CD8-positive, alpha-beta memory T cell (primary cell): ENCODE measurements at regions of chr1 and their contacts with region 1.

Region 1: GRCh38 chr1:64966158-64966971 is at the start of gene JAK1:
- DNase-seq: peak; percentile 86 to 93 (median 88)
- H3K4me3 ChIP-seq: peak within 1 kb of the TSS; percentile 78
- H3K4me3 Mint-ChIP-seq: peak within 1 kb of the TSS; percentile 91 to 98 (median 93)
- H3K27ac ChIP-seq: peak within 1 kb of the TSS; percentile 93
- H3K27ac Mint-ChIP-seq: peak within 1 kb of the TSS; percentile 92 to 99 (median 97)
- H3K4me1 ChIP-seq: peaks cover 48% of the 10 kb centered on the region
- H3K4me1 Mint-ChIP-seq: peaks cover 17 to 56% (median 50%) of the 10 kb centered on the region in 3 donors
- H3K27me3 ChIP-seq: no peaks in the 10 kb centered on the region
- H3K27me3 Mint-ChIP-seq: no peaks in the 10 kb centered on the region
- total RNA-seq, gene JAK1: 106 to 108 TPM

Region 2: GRCh38 chr1:64864018-64864940 is 102.1 kb before region 1 on chr1:
- CTCF ChIA-PET with region 1: interaction called, 16 read pairs
- POLR2A ChIA-PET with region 1: interaction called, 4 read pairs
- DNase-seq: peak; percentile 40 to 81 (median 49)
- H3K4me3 ChIP-seq: no peak overlapping the region
- H3K4me3 Mint-ChIP-seq: peak overlapping the region in 6 of 7 donors; percentile 30 to 66 (median 62)
- H3K27ac ChIP-seq: peak overlapping the region; percentile 55
- H3K27ac Mint-ChIP-seq: peak overlapping the region; percentile 76 to 97 (median 88)
- H3K4me1 ChIP-seq: peaks cover 31% of the 10 kb centered on the region
- H3K4me1 Mint-ChIP-seq: peaks cover 51 to 66% (median 59%) of the 10 kb centered on the region in 3 donors
- H3K27me3 ChIP-seq: no peaks in the 10 kb centered on the region
- H3K27me3 Mint-ChIP-seq: no peaks in the 10 kb centered on the region

Region 3: DNA sequence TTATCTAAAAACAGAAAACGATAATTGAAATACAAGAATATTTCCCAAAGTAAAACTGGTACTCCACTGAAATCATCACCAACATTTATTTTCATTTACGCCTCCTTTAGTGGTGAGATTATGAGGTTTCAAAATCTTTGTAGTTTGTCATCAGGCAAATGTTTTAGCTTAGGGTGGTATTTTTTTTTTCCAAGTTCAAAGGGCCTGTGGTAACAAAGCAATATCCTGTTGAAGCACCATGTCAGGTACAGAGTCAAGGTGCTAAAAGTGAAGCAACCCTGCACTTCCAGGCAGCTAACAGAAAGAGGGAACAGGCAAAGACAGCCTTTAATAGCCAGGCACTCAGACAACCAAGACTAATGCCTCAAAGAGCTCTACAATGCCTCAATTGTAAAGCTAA is 89.2 kb before region 1 on chr1:
- CTCF ChIA-PET with region 1: interaction called, 4 read pairs
- POLR2A ChIA-PET with region 1: interaction called, 27 read pairs
- DNase-seq: peak in 4 of 5 donors; percentile 33 to 88 (median 74)
- H3K4me3 ChIP-seq: peak overlapping the region; percentile 6
- H3K4me3 Mint-ChIP-seq: peak overlapping the region; percentile 72 to 84 (median 83)
- H3K27ac ChIP-seq: no peak overlapping the region
- H3K27ac Mint-ChIP-seq: peak overlapping the region in 7 of 8 donors; percentile 76 to 98 (median 86)
- H3K4me1 ChIP-seq: peaks cover 55% of the 10 kb centered on the region
- H3K4me1 Mint-ChIP-seq: peaks cover 78 to 90% (median 89%) of the 10 kb centered on the region in 3 donors
- H3K27me3 ChIP-seq: no peaks in the 10 kb centered on the region
- H3K27me3 Mint-ChIP-seq: peaks cover 0 to 5% of the 10 kb centered on the region in 2 donors

Region 4: GRCh38 chr1:64923294-64923721 is 43.1 kb before region 1 on chr1:
- CTCF ChIA-PET with region 1: interaction called, 10 read pairs
- POLR2A ChIA-PET with region 1: interaction called, 3 read pairs
- DNase-seq: peak; percentile 13 to 50 (median 25)
- H3K4me3 ChIP-seq: no peak overlapping the region
- H3K4me3 Mint-ChIP-seq: peak overlapping the region; percentile 41 to 65 (median 59)
- H3K27ac ChIP-seq: no peak overlapping the region
- H3K27ac Mint-ChIP-seq: peak overlapping the region; percentile 68 to 88 (median 75)
- H3K4me1 ChIP-seq: peaks cover 79% of the 10 kb centered on the region
- H3K4me1 Mint-ChIP-seq: peaks cover 94 to 100% (median 100%) of the 10 kb centered on the region in 3 donors
- H3K27me3 ChIP-seq: no peaks in the 10 kb centered on the region
- H3K27me3 Mint-ChIP-seq: no peaks in the 10 kb centered on the region

Region 5: DNA sequence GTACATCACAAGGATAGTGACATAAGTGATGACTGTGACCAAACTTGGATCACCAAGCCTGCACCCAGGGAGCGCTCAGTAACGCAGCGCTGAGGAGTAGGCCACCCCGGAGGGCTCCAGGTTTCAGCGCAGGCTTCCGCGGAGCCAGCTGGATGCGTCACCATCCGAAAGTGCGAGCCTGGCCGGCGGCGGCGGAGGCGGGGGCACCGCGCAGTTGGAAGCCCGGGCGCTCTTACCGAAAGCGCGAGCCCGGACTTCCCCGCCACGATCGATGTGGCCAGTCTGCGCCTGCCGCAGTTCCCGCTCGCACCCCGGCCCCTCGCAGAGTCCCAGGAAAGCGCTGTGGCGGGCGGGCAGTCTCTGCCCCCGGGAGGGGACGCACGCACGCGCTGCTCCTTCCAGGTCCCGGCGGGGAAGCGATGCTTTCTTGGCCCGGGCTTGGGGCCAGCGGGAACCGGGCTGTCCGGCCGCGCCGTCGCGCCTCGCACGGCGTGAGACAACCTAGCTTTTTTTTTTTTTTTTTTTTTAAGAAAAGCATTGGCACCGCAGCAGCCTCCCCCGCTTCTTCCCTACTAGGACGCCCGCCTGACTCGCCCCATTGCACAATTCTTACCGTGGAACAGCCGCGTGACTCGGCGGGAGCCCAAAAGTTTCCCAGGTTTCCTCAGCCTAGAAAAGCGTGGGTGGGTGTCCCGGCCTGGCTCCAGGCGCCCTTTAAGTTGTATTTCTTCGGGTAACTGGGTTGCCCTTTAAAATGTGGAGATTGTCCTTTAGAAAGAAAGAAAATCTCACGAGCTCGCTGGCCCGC is 36.3 kb after region 1 on chr1:
- CTCF ChIA-PET with region 1: interaction called, 4 read pairs
- POLR2A ChIA-PET with region 1: interaction called, 11 read pairs
- DNase-seq: peak; percentile 64 to 82 (median 75)
- H3K4me3 ChIP-seq: peak overlapping the region; percentile 56
- H3K4me3 Mint-ChIP-seq: peak overlapping the region; percentile 67 to 89 (median 86)
- H3K27ac ChIP-seq: no peak overlapping the region
- H3K27ac Mint-ChIP-seq: peak overlapping the region in 7 of 8 donors; percentile 48 to 99 (median 96)
- H3K4me1 ChIP-seq: peaks cover 18% of the 10 kb centered on the region
- H3K4me1 Mint-ChIP-seq: peaks cover 27 to 32% (median 29%) of the 10 kb centered on the region in 3 donors
- H3K27me3 ChIP-seq: no peaks in the 10 kb centered on the region
- H3K27me3 Mint-ChIP-seq: peaks cover 6 to 7% of the 10 kb centered on the region in 2 donors

Region 6: GRCh38 chr1:65027666-65028358 is 61.4 kb after region 1 on chr1:
- CTCF ChIA-PET with region 1: no interaction called
- POLR2A ChIA-PET with region 1: no interaction called
- DNase-seq: no peak
- H3K4me3 ChIP-seq: no peak overlapping the region
- H3K4me3 Mint-ChIP-seq: no peak overlapping the region
- H3K27ac ChIP-seq: no peak overlapping the region
- H3K27ac Mint-ChIP-seq: peak overlapping the region in 1 of 8 donors; percentile 76
- H3K4me1 ChIP-seq: no peaks in the 10 kb centered on the region
- H3K4me1 Mint-ChIP-seq: peaks cover 9 to 25% (median 10%) of the 10 kb centered on the region in 3 donors
- H3K27me3 ChIP-seq: no peaks in the 10 kb centered on the region
- H3K27me3 Mint-ChIP-seq: no peaks in the 10 kb centered on the region

Region 7: GRCh38 chr1:65067491-65068201 is 101.3 kb after region 1 on chr1:
- CTCF ChIA-PET with region 1: interaction called, 6 read pairs
- POLR2A ChIA-PET with region 1: interaction called, 15 read pairs
- DNase-seq: peak; percentile 24 to 77 (median 57)
- H3K4me3 ChIP-seq: peak overlapping the region; percentile 97
- H3K4me3 Mint-ChIP-seq: peak overlapping the region; percentile 87 to 97 (median 94)
- H3K27ac ChIP-seq: peak overlapping the region; percentile 95
- H3K27ac Mint-ChIP-seq: peak overlapping the region; percentile 94 to 99 (median 97)
- H3K4me1 ChIP-seq: peaks cover 45% of the 10 kb centered on the region
- H3K4me1 Mint-ChIP-seq: peaks cover 46 to 69% (median 65%) of the 10 kb centered on the region in 3 donors
- H3K27me3 ChIP-seq: no peaks in the 10 kb centered on the region
- H3K27me3 Mint-ChIP-seq: peaks cover 0 to 3% of the 10 kb centered on the region in 2 donors